Activated CD8-positive, alpha-beta T cell treated with anti-CD3 and anti-CD28 coated beads, Interleukin-2, amount 10 ng/mL, durations not matched to agents 7 days and 5 days (primary cell): ENCODE measurements at regions of chr6 and their contacts with region 1.

Region 1: DNA sequence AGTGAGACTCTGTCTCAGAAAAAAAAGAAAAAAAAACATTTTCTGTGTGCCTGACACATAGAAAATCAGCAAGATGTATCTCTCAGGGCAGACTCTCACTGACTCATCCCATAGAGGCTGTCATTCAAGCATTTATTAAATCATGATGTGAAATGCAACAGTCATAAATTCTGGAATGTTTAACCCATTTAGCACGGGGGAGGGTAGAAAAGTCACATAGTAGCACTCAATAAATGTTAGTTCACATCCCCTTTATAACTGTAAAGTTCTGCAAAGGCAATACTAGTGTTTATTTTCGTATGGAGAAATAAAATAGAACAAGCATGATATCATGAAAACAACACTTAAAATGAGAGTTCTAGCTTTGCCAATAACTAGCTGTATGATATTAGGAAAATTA is 15.5 kb upstream of the CARMIL1 start:
- DNase-seq: no peak
- ATAC-seq: no peak
- H3K4me3 Mint-ChIP-seq: no peak overlapping the region
- H3K27ac Mint-ChIP-seq: no peak overlapping the region
- H3K4me1 Mint-ChIP-seq: no peaks in the 10 kb centered on the region
- H3K27me3 Mint-ChIP-seq: peaks cover 6% of the 10 kb centered on the region

Region 2: GRCh38 chr6:25061289-25061936 is 202.2 kb before region 1 on chr6:
- CTCF ChIA-PET with region 1: no interaction called
- POLR2A ChIA-PET with region 1: no interaction called
- DNase-seq: no peak
- ATAC-seq: no peak
- H3K4me3 Mint-ChIP-seq: no peak overlapping the region
- H3K27ac Mint-ChIP-seq: peak overlapping the region; percentile 9
- H3K4me1 Mint-ChIP-seq: peaks cover 41% of the 10 kb centered on the region
- H3K27me3 Mint-ChIP-seq: no peaks in the 10 kb centered on the region

Region 3: DNA sequence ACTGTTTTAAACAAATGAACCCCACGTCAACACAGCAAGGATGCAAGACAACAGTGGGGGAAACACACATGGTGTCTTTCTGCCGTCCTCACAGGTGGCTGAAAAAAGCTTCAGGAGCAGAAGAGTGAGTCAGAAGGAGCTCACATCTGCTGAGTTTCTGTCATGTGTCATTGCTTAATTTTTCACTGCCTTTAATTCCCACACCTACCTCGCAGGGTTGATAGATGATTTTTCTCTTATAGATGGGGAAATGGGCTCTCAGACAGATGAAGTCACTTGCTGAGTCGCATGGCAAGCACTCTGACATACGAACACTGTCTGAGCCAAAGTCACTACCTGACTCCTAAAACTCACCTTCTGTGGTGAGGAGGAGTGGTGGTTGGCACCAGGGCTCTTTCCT is 12.8 kb before region 1 on chr6:
- CTCF ChIA-PET with region 1: interaction called, 44 read pairs
- POLR2A ChIA-PET with region 1: no interaction called
- DNase-seq: no peak
- ATAC-seq: no peak
- H3K4me3 Mint-ChIP-seq: no peak overlapping the region
- H3K27ac Mint-ChIP-seq: no peak overlapping the region
- H3K4me1 Mint-ChIP-seq: peaks cover 6% of the 10 kb centered on the region
- H3K27me3 Mint-ChIP-seq: peaks cover 9% of the 10 kb centered on the region

Region 4: GRCh38 chr6:25288143-25288917 is 24.7 kb after region 1 on chr6:
- CTCF ChIA-PET with region 1: interaction called, 11 read pairs
- POLR2A ChIA-PET with region 1: no interaction called
- DNase-seq: no peak
- ATAC-seq: no peak
- H3K4me3 Mint-ChIP-seq: no peak overlapping the region
- H3K27ac Mint-ChIP-seq: no peak overlapping the region
- H3K4me1 Mint-ChIP-seq: no peaks in the 10 kb centered on the region
- H3K27me3 Mint-ChIP-seq: no peaks in the 10 kb centered on the region

Region 5: GRCh38 chr6:25490018-25490801 is 226.6 kb after region 1 on chr6:
- CTCF ChIA-PET with region 1: interaction called, 116 read pairs
- POLR2A ChIA-PET with region 1: interaction called, 5 read pairs
- DNase-seq: peak; percentile 80
- ATAC-seq: peak; percentile 91
- H3K4me3 Mint-ChIP-seq: no peak overlapping the region
- H3K27ac Mint-ChIP-seq: peak overlapping the region; percentile 37
- H3K4me1 Mint-ChIP-seq: peaks cover 7% of the 10 kb centered on the region
- H3K27me3 Mint-ChIP-seq: no peaks in the 10 kb centered on the region

Region 6: DNA sequence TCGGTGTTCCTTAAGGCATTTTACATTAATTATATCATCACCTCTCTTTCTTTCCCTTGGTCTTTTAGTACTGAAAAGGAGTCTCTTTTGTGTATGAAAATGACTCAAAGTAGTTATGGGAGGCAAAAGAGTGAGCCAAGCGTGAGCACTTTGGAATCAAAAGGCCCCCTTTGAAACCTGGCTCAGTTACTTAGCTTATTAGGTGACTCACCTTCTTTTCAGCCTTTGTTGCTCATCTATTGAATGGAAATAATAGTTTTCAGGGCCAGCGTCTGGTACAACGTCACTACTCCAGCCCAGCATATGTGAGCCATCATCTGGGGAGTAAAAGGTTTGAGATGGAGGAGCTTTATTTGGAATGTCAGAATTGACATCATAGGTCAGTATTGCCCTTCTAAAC is 241.0 kb after region 1 on chr6:
- CTCF ChIA-PET with region 1: interaction called, 18 read pairs
- POLR2A ChIA-PET with region 1: no interaction called
- DNase-seq: no peak
- ATAC-seq: no peak
- H3K4me3 Mint-ChIP-seq: no peak overlapping the region
- H3K27ac Mint-ChIP-seq: no peak overlapping the region
- H3K4me1 Mint-ChIP-seq: no peaks in the 10 kb centered on the region
- H3K27me3 Mint-ChIP-seq: no peaks in the 10 kb centered on the region

Region 7: DNA sequence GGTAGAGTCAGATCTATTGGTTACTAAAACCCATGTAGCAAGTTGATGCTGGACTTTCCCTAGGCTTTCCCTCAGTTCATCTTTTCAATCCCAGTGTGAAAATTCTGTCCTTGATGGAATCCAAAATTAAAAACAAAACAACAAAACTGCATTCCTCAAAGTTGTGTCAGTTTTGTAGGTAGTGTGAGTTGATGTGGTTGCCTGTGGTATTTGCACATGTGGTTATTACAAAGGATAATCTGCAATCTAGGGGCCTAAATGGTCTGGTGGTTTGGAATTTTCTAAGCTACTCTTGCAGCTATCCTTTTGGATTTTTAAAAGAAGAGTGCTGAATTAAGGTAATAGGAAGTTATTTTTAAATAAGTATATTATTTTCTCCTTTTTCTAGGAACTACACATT is 256.2 kb after region 1 on chr6:
- CTCF ChIA-PET with region 1: interaction called, 10 read pairs
- POLR2A ChIA-PET with region 1: no interaction called
- DNase-seq: no peak
- ATAC-seq: no peak
- H3K4me3 Mint-ChIP-seq: no peak overlapping the region
- H3K27ac Mint-ChIP-seq: no peak overlapping the region
- H3K4me1 Mint-ChIP-seq: no peaks in the 10 kb centered on the region
- H3K27me3 Mint-ChIP-seq: no peaks in the 10 kb centered on the region

Region 8: GRCh38 chr6:25601800-25602673 is 338.4 kb after region 1 on chr6:
- CTCF ChIA-PET with region 1: interaction called, 24 read pairs
- POLR2A ChIA-PET with region 1: no interaction called
- DNase-seq: no peak
- ATAC-seq: no peak
- H3K4me3 Mint-ChIP-seq: no peak overlapping the region
- H3K27ac Mint-ChIP-seq: no peak overlapping the region
- H3K4me1 Mint-ChIP-seq: no peaks in the 10 kb centered on the region
- H3K27me3 Mint-ChIP-seq: no peaks in the 10 kb centered on the region